ENCODE measurements at regions of chr4 and their contacts with region 1.

Region 1: GRCh38 chr4:70544279-70544868 is 26.0 kb downstream of the AMTN start:
- DNase-seq: no peak
- H3K4me3 Mint-ChIP-seq: no peak overlapping the region
- H3K27ac Mint-ChIP-seq: no peak overlapping the region
- H3K4me1 Mint-ChIP-seq: no peaks in the 10 kb centered on the region
- H3K27me3 Mint-ChIP-seq: no peaks in the 10 kb centered on the region

Region 2: DNA sequence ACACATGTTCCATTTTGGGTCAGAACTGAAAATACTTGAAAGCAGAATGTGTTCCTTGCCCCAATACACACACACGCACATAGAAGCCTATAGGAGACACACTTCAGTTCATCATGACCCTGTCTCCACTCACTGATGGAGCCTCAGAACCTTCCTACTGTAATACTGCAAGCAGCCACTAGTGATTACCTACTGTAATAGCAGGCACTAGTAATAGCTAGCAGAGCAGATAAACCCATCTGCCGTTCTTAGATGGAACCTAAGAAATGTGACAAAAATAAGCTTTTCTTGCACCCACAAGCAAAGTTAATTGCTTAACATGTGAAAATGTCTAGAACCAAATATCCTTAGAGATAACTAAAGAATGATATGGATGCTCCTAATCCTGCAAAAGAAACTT is 12.4 kb before region 1 on chr4:
- intact Hi-C with region 1: loop called (anchors 2 kb)
- DNase-seq: no peak
- H3K4me3 Mint-ChIP-seq: no peak overlapping the region
- H3K27ac Mint-ChIP-seq: no peak overlapping the region
- H3K4me1 Mint-ChIP-seq: no peaks in the 10 kb centered on the region
- H3K27me3 Mint-ChIP-seq: peaks cover 2% of the 10 kb centered on the region

Measured in activated CD4-positive, alpha-beta T cell treated with anti-CD3 and anti-CD28 coated beads, Interleukin-2, amount 10 ng/mL, durations not matched to agents 24 days and 14 days (primary cell).